ENCODE measurements at regions of chr5 and their contacts with region 1.

Region 1: GRCh38 chr5:141524604-141525597 is 36.0 kb downstream of the PCDHGC5 start:
- DNase-seq: peak; percentile 90
- H3K4me3 ChIP-seq: no peak overlapping the region
- H3K27ac ChIP-seq: peak overlapping the region; percentile 74
- H3K4me1 ChIP-seq: peaks cover 51% of the 10 kb centered on the region
- H3K27me3 ChIP-seq: no peaks in the 10 kb centered on the region
- CTCF ChIP-seq: peak; percentile 99 to 100

Region 2: GRCh38 chr5:140882591-140882899 is 642.4 kb before region 1 on chr5:
- CTCF ChIA-PET with region 1: no interaction called
- dilution Hi-C with region 1: no loop called
- in situ Hi-C with region 1: no loop called
- intact Hi-C with region 1: no loop called
- DNase-seq: peak; percentile 49
- H3K4me3 ChIP-seq: no peak overlapping the region
- H3K27ac ChIP-seq: no peak overlapping the region
- H3K4me1 ChIP-seq: no peaks in the 10 kb centered on the region
- H3K27me3 ChIP-seq: no peaks in the 10 kb centered on the region
- CTCF ChIP-seq: peak in 1 of 2 donors; percentile 40

Region 3: GRCh38 chr5:141313711-141314110 is 211.2 kb before region 1 on chr5:
- CTCF ChIA-PET with region 1: no interaction called
- dilution Hi-C with region 1: no loop called
- in situ Hi-C with region 1: no loop called
- intact Hi-C with region 1: no loop called
- DNase-seq: no peak
- H3K4me3 ChIP-seq: no peak overlapping the region
- H3K27ac ChIP-seq: no peak overlapping the region
- H3K4me1 ChIP-seq: no peaks in the 10 kb centered on the region
- H3K27me3 ChIP-seq: no peaks in the 10 kb centered on the region
- CTCF ChIP-seq: no peak

Region 4: GRCh38 chr5:141369994-141370848 is 154.7 kb before region 1 on chr5 and contains the start of gene PCDHGB3:
- CTCF ChIA-PET with region 1: no interaction called
- dilution Hi-C with region 1: no loop called
- in situ Hi-C with region 1: no loop called
- intact Hi-C with region 1: loop called (anchors 5 kb)
- DNase-seq: peak; percentile 12
- H3K4me3 ChIP-seq: peak within 1 kb of the TSS in 2 of 3 experiments; percentile 4 to 26
- H3K27ac ChIP-seq: no peak within 1 kb of the TSS
- H3K4me1 ChIP-seq: no peaks in the 10 kb centered on the region
- H3K27me3 ChIP-seq: peaks cover 1% of the 10 kb centered on the region
- CTCF ChIP-seq: peak; percentile 28 to 40
- total RNA-seq, gene PCDHGB3: 1.8 to 4.2 TPM

Region 5: GRCh38 chr5:141430332-141431113 is 94.4 kb before region 1 on chr5 and contains the start of gene PCDHGA12:
- CTCF ChIA-PET with region 1: interaction called, 3 read pairs
- dilution Hi-C with region 1: no loop called
- in situ Hi-C with region 1: no loop called
- intact Hi-C with region 1: loop called (anchors 1 kb)
- DNase-seq: peak; percentile 82
- H3K4me3 ChIP-seq: peak within 1 kb of the TSS in 2 of 3 experiments; percentile 3 to 17
- H3K27ac ChIP-seq: no peak within 1 kb of the TSS
- H3K4me1 ChIP-seq: no peaks in the 10 kb centered on the region
- H3K27me3 ChIP-seq: no peaks in the 10 kb centered on the region
- CTCF ChIP-seq: peak; percentile 58 to 65
- total RNA-seq, gene PCDHGA12: 3.2 to 24.5 TPM

Region 6: GRCh38 chr5:141484641-141485311 is 40.1 kb before region 1 on chr5 and contains the start of gene PCDHGC4:
- CTCF ChIA-PET with region 1: no interaction called
- dilution Hi-C with region 1: loop called (anchors 5 kb)
- in situ Hi-C with region 1: loop called (anchors 5 kb)
- intact Hi-C with region 1: no loop called
- DNase-seq: no peak
- H3K4me3 ChIP-seq: peak within 1 kb of the TSS in 1 of 3 experiments; percentile 4
- H3K27ac ChIP-seq: no peak within 1 kb of the TSS
- H3K4me1 ChIP-seq: peaks cover 37% of the 10 kb centered on the region
- H3K27me3 ChIP-seq: no peaks in the 10 kb centered on the region
- CTCF ChIP-seq: no peak
- total RNA-seq, gene PCDHGC4: 1.2 to 2.7 TPM

Measured in mammary epithelial cell (primary cell).